ENCODE measurements at regions of chr5 and their contacts with region 1.

Region 1: DNA sequence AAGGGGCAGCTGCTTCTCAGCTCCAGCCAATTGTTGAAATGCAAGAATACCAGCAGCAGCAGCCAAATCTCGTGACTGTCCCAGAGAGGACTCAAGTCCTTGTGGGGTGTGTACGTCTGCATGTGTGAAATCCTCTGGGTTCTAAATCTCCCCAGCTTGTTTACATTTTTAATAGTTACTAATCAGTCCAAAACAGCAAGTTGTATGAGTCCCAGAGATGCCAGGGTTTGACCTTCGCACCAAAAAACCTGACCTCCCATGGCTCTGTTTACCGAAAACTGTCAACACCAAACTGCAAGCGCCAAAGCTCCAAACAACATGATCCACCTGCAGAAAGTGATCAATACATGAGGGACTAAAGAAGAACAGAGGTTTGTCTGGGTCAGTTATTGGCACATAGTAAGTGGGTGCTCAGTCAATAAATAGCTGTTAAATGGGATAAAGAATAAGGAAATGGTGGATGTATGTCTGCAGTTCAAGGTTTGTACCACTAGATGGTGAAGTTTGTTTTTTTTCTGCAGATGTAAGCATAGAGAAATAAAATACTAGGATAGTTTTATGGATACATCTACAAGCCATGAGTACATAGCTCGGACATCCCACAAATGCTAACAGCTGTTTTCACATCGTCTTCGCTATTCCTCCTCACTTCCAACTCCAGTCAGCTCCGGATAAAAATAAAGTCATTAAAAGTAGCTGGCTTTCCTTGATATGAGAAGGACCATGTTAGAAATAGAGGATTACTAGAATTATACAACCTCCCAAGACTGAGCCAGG is 85.3 kb upstream of the ADRB2 start:
- DNase-seq: peak; percentile 72
- H3K4me3 ChIP-seq: no peak overlapping the region
- H3K27ac ChIP-seq: no peak overlapping the region
- H3K27me3 ChIP-seq: no peaks in the 10 kb centered on the region
- CTCF ChIP-seq: peak; percentile 78

Region 2: GRCh38 chr5:148620696-148621095 is 120.5 kb before region 1 on chr5:
- CTCF ChIA-PET with region 1: no interaction called
- POLR2A ChIA-PET with region 1: no interaction called
- DNase-seq: no peak
- H3K4me3 ChIP-seq: no peak overlapping the region
- H3K27ac ChIP-seq: no peak overlapping the region
- H3K27me3 ChIP-seq: no peaks in the 10 kb centered on the region
- CTCF ChIP-seq: no peak

Region 3: DNA sequence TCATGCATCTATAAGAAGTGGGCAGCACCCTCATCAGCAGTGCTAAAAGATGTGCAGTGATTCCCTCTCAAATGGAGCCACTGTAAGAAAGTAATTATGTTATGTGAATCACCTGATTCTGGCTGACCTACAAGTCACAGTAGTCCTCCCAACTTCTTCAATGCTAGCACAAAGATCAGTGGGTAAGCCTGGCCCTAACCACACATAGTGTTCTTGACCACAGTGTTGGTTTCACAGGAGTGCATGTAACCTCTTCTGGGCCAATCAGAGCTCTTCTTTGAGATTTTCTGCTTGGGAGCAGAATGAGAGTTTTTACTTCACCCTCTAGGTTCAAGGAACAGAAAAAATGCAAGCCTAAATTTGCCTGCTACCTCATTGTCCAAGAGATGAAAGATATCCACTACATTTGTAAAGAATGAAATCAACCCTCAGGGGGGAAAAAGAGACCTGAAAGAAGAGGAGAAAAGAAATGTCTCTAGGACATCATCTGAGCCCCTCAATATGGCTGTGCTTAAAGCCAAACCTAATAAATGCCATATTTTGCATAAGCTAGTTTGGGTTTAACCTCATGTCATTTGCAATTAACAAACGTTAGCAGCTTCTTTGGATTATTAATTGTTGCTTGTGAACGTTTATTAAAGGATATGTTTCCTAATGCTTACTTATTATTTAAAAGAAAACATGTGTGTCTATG is 19.9 kb after region 1 on chr5:
- CTCF ChIA-PET with region 1: interaction called, 14 read pairs
- POLR2A ChIA-PET with region 1: no interaction called
- DNase-seq: no peak
- H3K4me3 ChIP-seq: no peak overlapping the region
- H3K27ac ChIP-seq: no peak overlapping the region
- H3K27me3 ChIP-seq: no peaks in the 10 kb centered on the region
- CTCF ChIP-seq: no peak

Region 4: DNA sequence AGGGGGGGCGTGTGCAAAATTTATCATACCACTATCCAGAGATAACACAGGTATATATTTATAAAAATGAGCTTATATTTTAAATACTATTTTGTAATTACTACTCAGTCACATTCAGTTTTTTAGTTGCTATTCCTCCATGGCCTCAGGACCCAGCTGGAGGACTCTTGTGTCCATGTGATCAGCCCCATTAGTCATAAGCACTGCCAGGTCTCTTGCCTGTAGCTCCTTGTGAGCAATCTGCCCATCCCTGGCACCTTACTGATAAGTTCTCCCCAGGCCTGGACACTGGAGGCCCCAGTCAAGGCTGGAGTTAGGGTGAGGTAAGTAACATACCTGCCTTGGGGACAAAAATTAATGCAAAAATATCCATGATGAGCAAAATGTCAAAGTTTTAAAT is 55.8 kb after region 1 on chr5:
- CTCF ChIA-PET with region 1: interaction called, 11 read pairs
- POLR2A ChIA-PET with region 1: no interaction called
- DNase-seq: no peak
- H3K4me3 ChIP-seq: no peak overlapping the region
- H3K27ac ChIP-seq: no peak overlapping the region
- H3K27me3 ChIP-seq: no peaks in the 10 kb centered on the region
- CTCF ChIP-seq: no peak

Region 5: GRCh38 chr5:148831590-148832565 is 90.7 kb after region 1 on chr5:
- CTCF ChIA-PET with region 1: interaction called, 17 read pairs
- POLR2A ChIA-PET with region 1: no interaction called
- DNase-seq: no peak
- H3K4me3 ChIP-seq: no peak overlapping the region
- H3K27ac ChIP-seq: no peak overlapping the region
- H3K27me3 ChIP-seq: no peaks in the 10 kb centered on the region
- CTCF ChIP-seq: no peak

Region 6: DNA sequence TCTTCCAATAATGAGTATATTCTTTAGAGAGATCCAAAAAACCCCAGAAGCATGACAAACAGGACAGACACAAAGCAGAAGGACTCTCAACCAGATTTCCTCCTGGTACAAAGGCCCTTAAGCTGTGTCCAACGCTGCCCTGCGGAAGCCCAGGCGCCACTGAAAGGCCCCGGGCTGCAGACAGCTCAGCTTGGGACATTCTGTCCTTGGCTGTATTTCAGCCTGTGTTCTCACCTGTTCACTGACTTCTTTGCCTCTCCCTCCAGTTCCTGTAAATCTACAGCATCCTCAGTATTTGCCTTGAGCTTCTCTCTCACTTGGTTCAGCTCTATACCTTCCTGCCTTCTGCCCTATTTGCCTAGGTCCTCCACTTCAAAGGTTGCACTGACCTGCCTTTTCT is 225.2 kb after region 1 on chr5:
- CTCF ChIA-PET with region 1: interaction called, 171 read pairs
- POLR2A ChIA-PET with region 1: no interaction called
- DNase-seq: no peak
- H3K4me3 ChIP-seq: no peak overlapping the region
- H3K27ac ChIP-seq: peak overlapping the region; percentile 12
- H3K27me3 ChIP-seq: no peaks in the 10 kb centered on the region
- CTCF ChIP-seq: no peak

Region 7: DNA sequence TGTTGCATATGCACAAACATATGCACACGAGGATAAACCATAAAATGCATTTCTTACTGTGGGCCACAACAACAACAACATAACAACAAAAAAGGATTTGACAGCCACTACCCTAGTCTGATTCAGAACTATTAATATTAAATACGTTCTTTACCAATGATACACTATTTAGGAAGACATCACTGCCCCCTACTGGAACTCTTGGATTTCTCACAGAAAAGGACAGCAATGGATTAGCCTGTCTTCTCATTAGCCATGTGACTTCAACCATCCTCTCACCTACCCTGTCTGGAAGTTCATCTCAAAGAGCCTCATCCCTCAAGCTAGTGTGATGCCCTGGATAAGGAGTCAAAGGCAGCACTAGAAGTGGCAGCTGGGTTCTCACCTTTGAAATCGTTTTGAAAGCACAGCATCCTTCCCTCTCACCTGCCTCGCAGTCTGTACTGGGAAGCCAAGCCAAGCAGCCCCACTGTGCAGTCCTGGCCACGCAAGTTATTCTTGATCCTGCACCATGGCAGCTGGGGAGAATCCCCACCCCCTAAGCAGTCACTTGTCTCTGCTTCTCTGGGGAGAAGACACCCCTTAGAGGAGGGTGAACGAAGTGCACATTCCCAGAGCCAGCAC is 257.1 kb after region 1 on chr5:
- CTCF ChIA-PET with region 1: interaction called, 246 read pairs
- POLR2A ChIA-PET with region 1: no interaction called
- DNase-seq: no peak
- H3K4me3 ChIP-seq: no peak overlapping the region
- H3K27ac ChIP-seq: no peak overlapping the region
- H3K27me3 ChIP-seq: no peaks in the 10 kb centered on the region
- CTCF ChIP-seq: peak; percentile 69

Region 8: GRCh38 chr5:149024477-149024876 is 283.3 kb after region 1 on chr5:
- CTCF ChIA-PET with region 1: interaction called, 1,022 read pairs
- POLR2A ChIA-PET with region 1: no interaction called
- DNase-seq: no peak
- H3K4me3 ChIP-seq: no peak overlapping the region
- H3K27ac ChIP-seq: no peak overlapping the region
- H3K27me3 ChIP-seq: no peaks in the 10 kb centered on the region
- CTCF ChIP-seq: no peak

Measured in AG04450 (cell line).